Activated CD8-positive, alpha-beta T cell treated with anti-CD3 and anti-CD28 coated beads, Interleukin-2, amount 10 ng/mL, durations not matched to agents 7 days and 5 days (primary cell): ENCODE measurements at regions of chr7 and their contacts with region 1.

Region 1: DNA sequence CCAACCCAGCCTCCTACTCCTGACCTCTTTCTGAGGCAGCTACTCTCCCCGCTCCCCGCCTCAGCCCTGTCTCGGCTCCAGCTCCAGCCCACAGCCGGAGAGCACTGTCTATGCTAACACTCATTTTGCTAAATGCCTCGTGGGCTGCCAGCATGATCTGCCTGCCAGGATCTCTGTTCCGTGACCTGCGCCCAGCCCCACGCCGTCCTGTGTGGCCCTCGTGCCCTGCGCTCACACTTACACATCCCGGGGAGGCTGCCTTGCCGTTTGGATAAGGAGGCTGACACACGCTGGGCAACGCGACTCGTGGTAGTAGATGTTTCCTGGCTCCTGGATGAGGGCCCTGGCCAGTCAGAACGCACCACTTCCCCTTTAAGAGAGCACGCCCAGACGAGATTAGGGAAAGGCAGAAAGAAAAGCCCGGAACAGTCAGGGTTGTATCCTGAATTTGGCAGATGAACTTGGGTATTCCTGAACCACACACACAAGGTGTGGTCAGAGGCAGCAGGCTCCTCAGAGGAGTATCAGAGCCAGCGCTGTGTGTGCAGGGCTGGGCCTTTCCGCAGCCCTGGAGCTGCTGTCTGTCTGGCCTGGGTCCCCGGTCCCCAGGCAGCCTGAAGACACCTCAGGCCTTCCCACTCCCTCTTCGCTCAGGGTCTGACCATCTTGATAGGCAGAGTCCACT is 97.7 kb upstream of the EFCAB10 start:
- DNase-seq: no peak
- ATAC-seq: no peak
- H3K4me3 Mint-ChIP-seq: peak overlapping the region; percentile 70
- H3K27ac Mint-ChIP-seq: peak overlapping the region; percentile 93
- H3K4me1 Mint-ChIP-seq: peaks cover 46% of the 10 kb centered on the region
- H3K27me3 Mint-ChIP-seq: peaks cover 2% of the 10 kb centered on the region

Region 2: GRCh38 chr7:105691733-105692564 is 13.0 kb after region 1 on chr7:
- CTCF ChIA-PET with region 1: interaction called, 10 read pairs
- POLR2A ChIA-PET with region 1: interaction called, 12 read pairs
- DNase-seq: peak; percentile 66
- ATAC-seq: peak; percentile 76
- H3K4me3 Mint-ChIP-seq: peak overlapping the region; percentile 80
- H3K27ac Mint-ChIP-seq: peak overlapping the region; percentile 84
- H3K4me1 Mint-ChIP-seq: peaks cover 34% of the 10 kb centered on the region
- H3K27me3 Mint-ChIP-seq: peaks cover 21% of the 10 kb centered on the region